Naive thymus-derived CD4-positive, alpha-beta T cell (primary cell): ENCODE measurements at regions of chr5 and their contacts with region 1.

Region 1: DNA sequence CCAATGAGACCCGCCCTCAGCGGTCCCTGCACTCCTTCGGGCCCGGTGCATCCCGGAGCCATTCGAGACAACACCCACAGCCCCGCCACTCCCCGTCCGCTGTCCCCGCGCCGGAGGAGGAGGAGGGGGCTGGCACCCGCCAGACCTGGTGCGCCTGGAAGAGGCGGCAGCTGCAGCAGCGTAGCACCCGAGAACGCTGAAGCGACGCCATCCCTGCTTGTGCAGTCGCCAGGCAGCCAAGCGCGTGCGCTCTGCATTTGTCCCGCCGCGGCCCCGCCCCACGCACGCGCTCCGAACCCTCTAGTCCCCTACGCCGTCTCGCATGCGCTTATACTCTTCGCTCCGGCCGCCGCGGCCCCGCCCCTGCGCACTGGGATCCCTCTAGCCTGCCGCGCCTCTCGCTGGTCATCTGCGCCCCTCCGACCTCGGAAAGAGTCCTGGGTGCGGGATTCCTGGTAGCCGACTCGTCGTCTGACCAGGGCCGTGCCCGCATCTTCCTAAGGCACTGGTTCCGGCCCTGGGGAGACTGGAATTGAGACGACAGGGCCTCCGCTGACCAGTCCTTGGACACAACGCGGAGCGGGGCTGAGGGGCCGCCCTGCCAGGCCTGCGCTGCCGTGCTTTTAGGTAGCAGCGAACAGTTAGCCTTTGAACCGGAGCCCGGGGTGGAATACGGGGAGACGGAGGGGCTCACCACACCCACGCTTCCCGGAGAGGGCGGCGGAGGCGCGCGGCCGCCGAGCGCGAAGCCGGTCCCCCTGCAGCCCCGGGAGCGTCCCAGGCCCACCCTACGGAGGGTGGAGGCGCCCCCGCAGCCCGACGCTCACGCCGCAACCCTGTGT is at the start of gene MRNIP:
- DNase-seq: peak; percentile 75 to 94 (median 85)
- ATAC-seq: peak; percentile 98
- H3K4me3 ChIP-seq: peak within 1 kb of the TSS; percentile 91
- H3K4me3 Mint-ChIP-seq: peak within 1 kb of the TSS; percentile 89 to 99 (median 96)
- H3K27ac ChIP-seq: peak within 1 kb of the TSS; percentile 77
- H3K27ac Mint-ChIP-seq: peak within 1 kb of the TSS; percentile 86 to 95 (median 88)
- H3K4me1 ChIP-seq: peaks cover 5 to 12% of the 10 kb centered on the region in 2 donors
- H3K4me1 Mint-ChIP-seq: peaks cover 8 to 35% (median 26%) of the 10 kb centered on the region in 7 donors
- H3K27me3 ChIP-seq: no peaks in the 10 kb centered on the region
- H3K27me3 Mint-ChIP-seq: no peaks in the 10 kb centered on the region
- total RNA-seq, gene MRNIP: 27.9 to 133 (median 43.3) TPM

Region 2: DNA sequence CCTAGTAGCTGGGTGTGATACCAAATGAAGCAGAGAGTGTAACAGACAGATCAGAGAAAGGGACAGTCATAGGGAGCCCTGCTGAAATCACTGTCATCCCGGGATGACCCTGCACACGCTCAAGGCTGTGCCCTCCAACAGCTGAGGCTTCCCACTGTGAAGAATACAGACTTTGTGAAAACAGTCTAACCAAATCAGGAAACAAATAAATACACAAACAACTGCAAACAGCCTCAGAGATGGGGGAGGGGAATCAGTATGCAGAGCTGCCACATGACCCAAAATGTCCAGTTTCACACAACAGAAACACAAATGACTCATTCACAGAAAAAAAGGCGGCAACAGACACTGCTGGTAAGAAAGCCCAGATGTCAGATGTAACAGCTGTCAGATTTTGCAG is 615.5 kb before region 1 on chr5:
- CTCF ChIA-PET with region 1: no interaction called
- POLR2A ChIA-PET with region 1: no interaction called
- intact Hi-C with region 1: no loop called
- DNase-seq: no peak
- ATAC-seq: no peak
- H3K4me3 ChIP-seq: no peak overlapping the region
- H3K4me3 Mint-ChIP-seq: no peak overlapping the region
- H3K27ac ChIP-seq: no peak overlapping the region
- H3K27ac Mint-ChIP-seq: no peak overlapping the region
- H3K4me1 ChIP-seq: no peaks in the 10 kb centered on the region
- H3K4me1 Mint-ChIP-seq: no peaks in the 10 kb centered on the region
- H3K27me3 ChIP-seq: no peaks in the 10 kb centered on the region
- H3K27me3 Mint-ChIP-seq: peaks cover 0 to 55% (median 23%) of the 10 kb centered on the region in 5 donors

Region 3: DNA sequence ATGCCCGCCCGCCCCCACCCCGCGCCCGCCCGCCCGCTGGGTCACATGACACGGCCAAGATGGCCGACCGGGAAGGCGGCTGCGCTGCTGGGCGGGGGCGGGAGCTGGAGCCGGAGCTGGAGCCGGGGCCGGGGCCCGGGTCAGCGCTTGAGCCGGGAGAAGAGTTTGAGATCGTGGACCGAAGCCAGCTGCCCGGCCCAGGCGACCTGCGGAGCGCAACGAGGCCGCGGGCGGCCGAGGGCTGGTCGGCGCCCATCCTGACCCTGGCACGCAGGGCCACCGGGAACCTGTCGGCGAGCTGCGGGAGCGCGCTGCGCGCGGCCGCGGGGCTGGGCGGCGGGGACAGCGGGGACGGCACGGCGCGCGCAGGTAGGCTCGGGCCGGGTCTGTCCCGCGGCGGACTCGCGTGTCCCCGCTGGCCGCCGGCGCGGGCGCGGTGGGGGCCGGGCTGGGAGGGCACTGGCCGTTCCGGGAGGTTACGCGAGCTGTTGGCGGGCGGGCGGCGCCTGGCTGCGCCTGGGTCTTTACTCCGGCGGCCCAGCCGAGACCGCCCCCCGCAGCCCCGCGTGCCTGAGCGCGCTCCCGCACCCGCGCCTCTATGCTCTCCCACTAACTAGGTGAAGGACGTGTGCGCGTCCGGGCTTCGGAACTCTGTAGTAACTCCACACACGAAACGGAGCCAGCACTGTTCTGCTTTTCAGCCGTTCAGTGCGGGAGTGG is 308.1 kb before region 1 on chr5 and contains the start of gene RUFY1:
- CTCF ChIA-PET with region 1: no interaction called
- POLR2A ChIA-PET with region 1: no interaction called
- intact Hi-C with region 1: loop called (anchors 2 kb)
- DNase-seq: peak; percentile 74 to 92 (median 87)
- ATAC-seq: peak; percentile 90
- H3K4me3 ChIP-seq: peak within 1 kb of the TSS; percentile 84
- H3K4me3 Mint-ChIP-seq: peak within 1 kb of the TSS; percentile 94 to 99 (median 96)
- H3K27ac ChIP-seq: peak within 1 kb of the TSS; percentile 87
- H3K27ac Mint-ChIP-seq: peak within 1 kb of the TSS; percentile 91 to 99 (median 98)
- H3K4me1 ChIP-seq: peaks cover 12 to 15% of the 10 kb centered on the region in 2 donors
- H3K4me1 Mint-ChIP-seq: peaks cover 10 to 49% (median 35%) of the 10 kb centered on the region in 7 donors
- H3K27me3 ChIP-seq: no peaks in the 10 kb centered on the region
- H3K27me3 Mint-ChIP-seq: peaks cover 0 to 4% (median 0%) of the 10 kb centered on the region in 5 donors
- total RNA-seq, gene RUFY1: 31.8 to 63.0 (median 52.3) TPM

Region 4: DNA sequence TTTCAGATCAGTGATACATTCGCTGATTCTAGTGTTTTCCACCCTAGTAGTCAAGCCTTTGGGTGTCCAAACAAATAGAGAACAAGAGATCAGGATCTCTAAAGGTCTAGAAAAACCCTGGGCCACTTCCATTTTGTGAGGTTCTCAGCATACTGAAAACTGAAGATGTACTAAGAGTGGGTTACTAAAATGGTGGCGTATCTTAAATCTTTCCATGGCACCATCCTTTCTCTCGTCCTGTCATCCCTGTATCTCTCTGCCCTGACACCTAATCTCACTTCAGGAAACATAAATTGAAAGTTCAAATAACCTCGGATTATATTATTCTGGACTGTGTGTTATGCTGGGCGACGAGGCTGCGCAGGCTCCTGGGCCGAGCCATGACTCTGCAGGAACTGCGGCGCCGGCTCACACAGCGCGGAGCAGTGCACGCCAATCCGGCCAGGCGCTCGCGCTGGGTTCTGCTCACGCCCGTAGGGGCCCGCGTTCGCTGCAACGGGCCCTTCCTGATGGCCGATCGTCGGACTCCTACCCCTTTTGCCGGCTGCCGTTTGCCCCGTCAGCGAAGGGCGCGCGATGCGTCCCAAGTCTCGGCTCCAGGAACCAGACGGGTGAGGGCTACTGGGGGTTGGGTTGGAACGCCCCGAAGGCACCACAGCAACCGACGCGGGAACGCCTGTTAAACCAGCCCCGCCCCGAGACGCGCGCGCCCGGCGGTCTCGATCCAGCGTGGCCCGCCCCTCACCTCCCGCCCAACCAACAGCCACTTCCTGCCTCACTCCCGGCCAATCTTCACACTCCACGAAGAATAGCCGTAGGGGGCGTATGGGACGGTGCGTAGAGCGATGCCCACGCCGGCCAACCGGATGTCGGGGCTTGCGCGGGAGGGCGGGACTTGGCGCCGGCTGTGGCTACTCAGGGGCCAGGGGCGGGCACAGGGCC is 160.5 kb before region 1 on chr5:
- CTCF ChIA-PET with region 1: no interaction called
- POLR2A ChIA-PET with region 1: no interaction called
- intact Hi-C with region 1: loop called (anchors 1 to 2 kb)
- DNase-seq: peak; percentile 94 to 99 (median 99)
- ATAC-seq: peak; percentile 93
- H3K4me3 ChIP-seq: peak overlapping the region; percentile 72
- H3K4me3 Mint-ChIP-seq: peak overlapping the region; percentile 89 to 97 (median 96)
- H3K27ac ChIP-seq: peak overlapping the region; percentile 100
- H3K27ac Mint-ChIP-seq: peak overlapping the region; percentile 94 to 100 (median 98)
- H3K4me1 ChIP-seq: peaks cover 21 to 25% of the 10 kb centered on the region in 2 donors
- H3K4me1 Mint-ChIP-seq: peaks cover 23 to 53% (median 46%) of the 10 kb centered on the region in 7 donors
- H3K27me3 ChIP-seq: no peaks in the 10 kb centered on the region
- H3K27me3 Mint-ChIP-seq: no peaks in the 10 kb centered on the region

Region 5: DNA sequence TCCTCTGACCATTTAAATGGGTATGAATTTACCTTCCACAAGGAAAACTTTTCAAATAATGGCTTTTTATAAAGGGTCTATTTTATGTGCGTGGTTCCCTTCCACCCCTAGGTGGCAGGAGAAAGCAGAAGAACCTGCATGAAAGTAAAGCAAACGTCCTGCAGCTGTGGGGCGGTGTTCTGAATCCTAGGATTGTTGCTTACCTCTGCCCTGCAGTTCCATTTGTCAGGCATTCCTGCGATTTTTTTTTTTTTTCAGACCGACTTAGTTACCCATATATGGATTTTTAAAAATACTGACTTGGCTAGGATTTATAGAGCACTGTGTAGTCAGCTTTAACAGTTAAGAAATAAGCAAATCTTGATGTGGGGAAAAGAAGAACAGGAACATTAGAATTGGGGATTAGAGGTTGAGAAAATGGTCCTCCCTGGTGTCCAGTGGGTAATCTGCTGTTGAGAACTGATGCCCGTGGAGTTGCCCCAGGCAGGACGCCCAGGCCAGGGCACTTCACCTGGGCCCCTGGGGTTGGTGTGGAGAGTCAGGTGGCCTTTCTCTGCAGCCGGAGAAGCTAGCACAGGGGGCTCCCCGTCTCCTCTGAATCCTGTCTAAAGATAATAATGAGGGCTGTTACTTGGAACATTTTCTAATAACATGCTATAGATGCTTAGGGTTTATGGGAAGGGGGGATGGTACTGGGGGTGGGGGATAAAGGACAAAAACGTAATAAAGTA is 95.4 kb before region 1 on chr5:
- CTCF ChIA-PET with region 1: interaction called, 4 read pairs
- POLR2A ChIA-PET with region 1: no interaction called
- intact Hi-C with region 1: loop called (anchors 1 to 2 kb)
- DNase-seq: peak in 8 of 9 donors; percentile 32 to 64 (median 51)
- ATAC-seq: peak; percentile 75
- H3K4me3 ChIP-seq: no peak overlapping the region
- H3K4me3 Mint-ChIP-seq: peak overlapping the region in 2 of 10 donors; percentile 12 to 29
- H3K27ac ChIP-seq: no peak overlapping the region
- H3K27ac Mint-ChIP-seq: peak overlapping the region in 6 of 9 donors; percentile 10 to 90 (median 49)
- H3K4me1 ChIP-seq: peaks cover 7 to 13% of the 10 kb centered on the region in 2 donors
- H3K4me1 Mint-ChIP-seq: peaks cover 48 to 70% (median 57%) of the 10 kb centered on the region in 7 donors
- H3K27me3 ChIP-seq: no peaks in the 10 kb centered on the region
- H3K27me3 Mint-ChIP-seq: no peaks in the 10 kb centered on the region

Region 6: DNA sequence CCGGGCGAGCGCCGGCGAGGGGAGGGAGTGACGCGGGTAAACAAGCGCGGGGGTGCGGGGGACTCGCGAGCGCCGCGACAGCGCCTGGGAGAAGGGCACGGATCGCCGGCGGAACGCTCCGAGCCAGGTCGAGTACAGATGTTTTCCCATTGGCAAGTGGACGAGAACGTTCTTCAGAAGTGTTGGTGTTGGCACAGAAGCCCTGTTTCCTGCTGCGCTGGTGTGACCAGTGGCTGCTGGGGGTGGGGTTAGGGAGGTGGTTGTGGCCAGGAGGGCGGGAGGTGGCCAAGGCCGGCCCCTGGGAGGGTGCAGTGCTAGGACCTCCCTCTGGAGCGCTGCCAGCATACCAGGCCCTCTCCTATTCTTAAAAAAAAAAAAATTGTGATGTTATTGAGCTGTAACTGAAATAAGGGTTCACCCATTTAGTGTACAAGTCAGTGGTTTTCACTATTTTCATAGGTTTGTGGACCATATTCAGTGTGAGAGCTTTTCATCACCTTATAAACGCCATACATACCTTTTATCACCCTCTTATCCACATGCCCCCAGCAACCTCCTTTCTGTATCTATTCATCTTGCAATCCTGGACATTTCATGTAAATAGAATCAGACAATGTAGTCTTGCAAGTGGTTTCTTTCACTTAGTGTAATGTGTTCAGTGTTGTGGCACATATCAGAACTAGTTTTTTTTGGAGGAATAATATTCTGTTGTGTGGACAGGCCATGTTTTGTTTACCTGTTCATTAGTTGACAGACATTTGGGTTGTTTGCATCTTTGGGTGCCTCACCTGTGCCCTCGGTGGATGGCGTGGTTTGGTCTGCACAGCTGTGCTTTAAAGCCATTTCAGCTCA is 37.0 kb before region 1 on chr5:
- CTCF ChIA-PET with region 1: no interaction called
- POLR2A ChIA-PET with region 1: interaction called, 5 read pairs
- intact Hi-C with region 1: loop called (anchors 1 kb)
- DNase-seq: peak; percentile 72 to 88 (median 85)
- ATAC-seq: peak; percentile 73
- H3K4me3 ChIP-seq: peak overlapping the region; percentile 87
- H3K4me3 Mint-ChIP-seq: peak overlapping the region; percentile 88 to 98 (median 95)
- H3K27ac ChIP-seq: peak overlapping the region; percentile 96
- H3K27ac Mint-ChIP-seq: peak overlapping the region; percentile 79 to 97 (median 94)
- H3K4me1 ChIP-seq: peaks cover 31 to 36% of the 10 kb centered on the region in 2 donors
- H3K4me1 Mint-ChIP-seq: peaks cover 30 to 62% (median 45%) of the 10 kb centered on the region in 7 donors
- H3K27me3 ChIP-seq: no peaks in the 10 kb centered on the region
- H3K27me3 Mint-ChIP-seq: no peaks in the 10 kb centered on the region

Region 7: DNA sequence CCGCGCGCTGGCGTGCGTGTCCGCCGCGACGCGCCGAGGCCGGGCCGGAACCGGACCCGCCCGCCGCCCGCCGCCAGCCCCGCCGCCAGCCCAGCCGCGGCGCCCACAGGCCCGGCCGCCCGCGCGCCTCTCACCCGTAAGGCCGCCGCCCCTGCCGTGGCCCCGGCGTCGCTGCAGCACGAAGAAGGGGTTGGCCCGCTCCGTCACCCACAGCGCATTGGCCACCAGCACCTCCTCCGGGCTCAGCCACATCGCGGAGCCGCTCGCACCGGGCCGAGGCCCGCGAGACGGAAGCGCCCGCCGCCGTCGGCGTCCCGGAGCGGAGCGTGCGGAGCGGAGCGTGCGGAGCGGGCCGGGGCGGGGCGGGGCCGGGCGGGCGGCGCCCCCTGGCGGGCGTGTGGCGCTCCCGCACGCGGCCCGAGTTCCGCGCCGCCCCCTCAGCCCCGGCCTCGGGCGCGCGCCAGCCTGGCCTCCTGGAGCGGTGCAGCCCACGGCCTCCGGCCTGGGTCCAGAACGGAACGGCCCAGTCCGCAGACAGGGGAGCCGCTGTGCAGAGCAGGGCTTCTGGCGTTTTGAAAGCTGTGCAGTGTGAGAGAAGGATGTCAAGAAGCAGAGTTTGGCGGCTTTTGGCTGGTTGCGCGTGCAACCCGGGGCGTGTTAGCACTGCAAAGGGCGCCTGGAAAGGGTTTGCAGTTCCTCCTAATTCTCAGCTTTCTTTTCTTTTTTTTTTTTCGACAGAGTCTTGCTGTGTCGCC is 48.9 kb after region 1 on chr5 and contains the start of gene TBC1D9B:
- CTCF ChIA-PET with region 1: no interaction called
- POLR2A ChIA-PET with region 1: interaction called, 4 read pairs
- intact Hi-C with region 1: loop called (anchors 1 kb)
- DNase-seq: peak; percentile 68 to 81 (median 73)
- ATAC-seq: peak; percentile 95
- H3K4me3 ChIP-seq: peak within 1 kb of the TSS; percentile 64
- H3K4me3 Mint-ChIP-seq: peak within 1 kb of the TSS; percentile 78 to 92 (median 90)
- H3K27ac ChIP-seq: peak within 1 kb of the TSS; percentile 56
- H3K27ac Mint-ChIP-seq: peak within 1 kb of the TSS; percentile 42 to 91 (median 85)
- H3K4me1 ChIP-seq: peaks cover 13 to 14% of the 10 kb centered on the region in 2 donors
- H3K4me1 Mint-ChIP-seq: peaks cover 7 to 40% (median 23%) of the 10 kb centered on the region in 7 donors
- H3K27me3 ChIP-seq: no peaks in the 10 kb centered on the region
- H3K27me3 Mint-ChIP-seq: no peaks in the 10 kb centered on the region
- total RNA-seq, gene TBC1D9B: 71.3 to 117 (median 86.9) TPM

Region 8: DNA sequence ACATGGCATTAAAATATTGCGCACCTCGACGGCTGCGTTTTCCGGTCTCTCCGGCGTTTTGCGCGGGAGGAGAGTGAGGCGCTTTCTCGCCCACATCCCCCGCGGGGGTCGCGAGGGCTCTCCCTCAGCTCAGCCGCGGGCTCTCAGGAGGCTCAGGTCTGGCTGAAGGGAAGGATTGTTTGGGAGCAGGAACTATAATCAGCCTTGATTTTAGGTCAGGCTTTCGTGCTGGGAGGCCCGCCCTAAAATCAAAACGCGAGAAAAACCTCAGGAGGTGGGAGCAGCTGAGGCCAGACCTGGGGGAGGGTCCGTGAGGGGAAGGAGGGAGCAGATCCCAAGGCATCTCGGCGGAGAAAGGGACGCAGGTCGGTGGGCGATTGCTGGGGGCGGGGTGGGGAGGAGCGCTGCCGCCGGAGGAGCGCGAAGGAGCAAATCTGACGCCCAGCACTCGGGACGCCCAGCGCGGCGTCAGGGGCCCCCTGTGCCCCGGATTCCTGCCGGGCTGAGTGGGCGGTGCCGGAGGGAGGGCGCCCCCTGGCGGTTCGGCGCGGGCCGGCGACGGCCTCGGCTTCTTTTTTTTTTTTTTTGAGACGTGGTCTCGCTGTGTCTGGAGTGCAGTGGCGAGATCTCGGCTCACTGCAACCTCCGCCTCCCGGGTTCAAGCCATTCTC is 231.4 kb after region 1 on chr5:
- CTCF ChIA-PET with region 1: interaction called, 3 read pairs
- POLR2A ChIA-PET with region 1: no interaction called
- intact Hi-C with region 1: loop called in 1 of 2 experiments (anchors 2 kb)
- DNase-seq: peak; percentile 71 to 90 (median 85)
- ATAC-seq: peak; percentile 90
- H3K4me3 ChIP-seq: peak overlapping the region; percentile 81
- H3K4me3 Mint-ChIP-seq: peak overlapping the region; percentile 82 to 92 (median 88)
- H3K27ac ChIP-seq: peak overlapping the region; percentile 63
- H3K27ac Mint-ChIP-seq: peak overlapping the region in 8 of 9 donors; percentile 48 to 95 (median 84)
- H3K4me1 ChIP-seq: peaks cover 6% of the 10 kb centered on the region in 2 donors
- H3K4me1 Mint-ChIP-seq: peaks cover 6 to 34% (median 27%) of the 10 kb centered on the region in 7 donors
- H3K27me3 ChIP-seq: no peaks in the 10 kb centered on the region
- H3K27me3 Mint-ChIP-seq: peaks cover 0 to 10% (median 0%) of the 10 kb centered on the region in 5 donors